Sigmoid colon (tissue), 7 donors: ENCODE measurements at regions of chrX and their contacts with region 1.

Region 1: DNA sequence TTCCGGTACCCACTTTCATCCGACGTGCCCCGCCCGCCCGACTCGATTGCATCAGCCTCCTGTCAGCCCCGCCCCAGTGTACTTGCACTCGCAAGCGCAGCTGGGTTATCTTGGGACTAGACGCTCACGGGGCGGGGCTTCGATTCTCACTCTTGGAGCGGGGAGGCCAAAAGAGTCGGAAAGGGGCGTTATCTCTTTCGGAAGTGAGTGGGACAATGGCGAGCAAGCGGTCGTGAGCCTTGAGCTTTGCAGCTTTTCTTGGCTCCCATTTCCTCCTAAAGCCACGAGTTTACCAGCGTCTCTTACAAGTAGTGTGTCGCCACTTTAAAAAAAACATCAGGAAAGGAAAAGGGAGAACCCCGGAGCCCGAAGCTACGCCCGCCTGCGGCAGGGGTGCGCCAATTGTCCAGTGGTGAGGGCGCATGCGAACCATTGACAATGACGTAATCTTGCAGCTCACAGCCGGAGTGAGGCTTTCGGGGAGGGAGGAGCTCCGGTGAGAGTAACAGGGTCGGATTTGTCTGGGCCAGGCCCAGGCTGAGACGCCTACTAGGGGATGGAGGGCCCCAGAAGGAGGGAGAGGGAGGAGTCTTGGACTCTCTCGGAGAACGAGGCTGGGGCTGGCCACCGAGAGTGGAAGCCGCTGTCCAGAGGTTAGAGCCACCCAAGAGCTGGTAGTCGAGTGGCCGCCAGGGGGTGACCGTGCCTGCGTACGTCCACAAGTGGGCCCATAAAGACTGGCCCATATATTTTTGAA is 109.5 kb downstream of the GNL3L start:
- DNase-seq: peak; percentile 98
- H3K4me3 ChIP-seq: peak overlapping the region; percentile 34 to 48 (median 47)
- H3K27ac ChIP-seq: peak overlapping the region; percentile 82 to 88 (median 86)
- H3K4me1 ChIP-seq: peaks cover 0 to 6% (median 0%) of the 10 kb centered on the region in 4 donors
- H3K27me3 ChIP-seq: no peaks in the 10 kb centered on the region
- CTCF ChIP-seq: peak; percentile 20 to 55 (median 43)
- EP300 ChIP-seq: peak in 1 of 4 donors; percentile 24
- POLR2A ChIP-seq: peak in 1 of 2 donors; percentile 29

Region 2: DNA sequence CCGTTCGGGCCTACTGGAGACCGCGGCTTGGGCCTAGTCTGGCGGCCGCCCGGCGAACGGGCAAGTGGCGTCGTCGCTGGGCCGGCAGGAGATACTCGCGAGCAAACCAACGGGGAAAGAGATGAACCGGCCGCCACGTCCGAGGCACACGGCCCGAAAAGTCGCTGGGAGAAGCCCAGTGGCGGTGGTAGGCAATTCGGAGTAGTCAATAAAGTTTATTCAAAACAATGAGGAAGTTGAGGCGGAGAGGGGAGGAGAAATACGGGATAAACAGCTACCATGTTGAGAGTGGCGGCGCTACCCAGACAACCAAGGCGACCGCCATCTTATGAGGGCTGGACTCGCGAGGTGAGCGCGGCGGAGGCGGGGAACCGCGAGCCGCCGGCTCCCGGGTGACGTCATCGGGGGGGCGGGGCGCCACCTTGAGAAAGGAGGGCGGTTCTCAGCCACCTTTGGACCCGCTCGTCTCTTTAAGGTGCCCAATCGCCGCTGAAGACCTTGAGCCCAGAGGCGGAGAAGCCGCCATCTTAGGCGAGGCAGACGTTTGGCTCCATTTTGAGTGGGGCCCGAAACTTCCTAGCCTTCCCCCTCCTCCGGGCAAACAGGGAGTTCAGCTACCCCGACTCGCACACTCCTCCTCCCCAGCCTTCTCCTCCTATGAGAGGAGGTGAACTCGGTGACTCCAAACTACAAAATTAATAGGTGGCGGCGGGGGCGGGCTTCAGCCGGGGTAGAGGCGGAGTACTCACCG is 595.2 kb before region 1 on chrX and contains the start of gene PHF8:
- intact Hi-C with region 1: loop called (anchors 10 kb)
- DNase-seq: peak; percentile 97
- H3K4me3 ChIP-seq: peak within 1 kb of the TSS; percentile 62 to 76 (median 68)
- H3K27ac ChIP-seq: peak within 1 kb of the TSS; percentile 91 to 95 (median 93)
- H3K4me1 ChIP-seq: no peaks in the 10 kb centered on the region
- H3K27me3 ChIP-seq: no peaks in the 10 kb centered on the region
- CTCF ChIP-seq: no peak
- EP300 ChIP-seq: no peak
- POLR2A ChIP-seq: peak; percentile 16 to 31
- total RNA-seq, gene PHF8: 15.3 to 44.9 (median 22.1) TPM

Region 3: DNA sequence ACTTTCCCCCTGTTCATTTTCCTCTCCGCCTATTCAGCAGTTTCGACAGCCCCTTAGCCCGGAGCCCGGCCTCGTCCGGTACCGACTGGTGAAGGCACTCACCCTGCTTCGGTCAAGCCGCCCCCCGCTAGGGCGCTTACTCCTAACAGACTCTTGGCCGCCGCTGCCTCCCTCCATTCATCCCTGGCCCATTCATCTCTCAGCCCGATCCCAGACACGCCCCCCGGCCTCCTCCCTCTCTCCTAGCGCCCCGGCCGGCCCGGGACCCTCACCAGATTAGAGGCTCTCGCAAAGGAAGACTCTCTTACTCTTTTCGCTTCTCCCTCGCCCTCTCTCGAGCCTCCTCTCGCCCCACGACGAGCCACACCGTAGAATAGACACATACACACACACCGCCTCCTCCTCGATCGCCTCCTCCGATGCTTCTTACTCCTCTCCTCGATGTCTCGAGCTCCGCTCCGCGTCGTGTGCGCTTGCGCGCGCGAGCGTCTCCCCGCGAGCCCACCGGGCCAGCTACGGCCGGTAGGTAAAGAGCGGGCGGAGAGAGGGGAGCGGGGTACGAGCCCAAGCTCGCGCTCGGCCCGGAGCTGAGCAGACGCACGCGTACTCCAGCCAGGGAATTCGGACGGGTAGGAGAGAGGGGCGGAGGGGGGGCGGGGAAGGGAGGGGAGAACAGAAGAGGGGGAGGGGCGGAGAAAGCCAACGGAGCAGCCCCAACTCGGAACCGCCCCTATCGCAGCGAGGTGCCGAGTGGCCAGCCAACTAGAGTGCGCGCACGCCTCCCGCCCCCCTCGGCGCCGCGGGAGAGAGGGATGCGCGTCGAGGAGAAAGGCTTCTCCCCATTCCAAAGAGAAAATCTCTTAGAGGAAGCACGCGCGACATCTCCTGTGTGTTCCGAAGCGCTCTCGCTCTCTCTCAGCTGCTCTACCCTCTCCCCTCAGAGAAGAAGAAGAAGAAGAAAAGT is 281.8 kb before region 1 on chrX and contains the start of gene WNK3:
- intact Hi-C with region 1: loop called (anchors 5 kb)
- DNase-seq: peak; percentile 92
- H3K4me3 ChIP-seq: peak within 1 kb of the TSS; percentile 34 to 55 (median 52)
- H3K27ac ChIP-seq: peak within 1 kb of the TSS; percentile 68 to 78 (median 70)
- H3K4me1 ChIP-seq: peaks cover 0 to 4% (median 0%) of the 10 kb centered on the region in 4 donors
- H3K27me3 ChIP-seq: no peaks in the 10 kb centered on the region
- CTCF ChIP-seq: no peak
- EP300 ChIP-seq: no peak
- POLR2A ChIP-seq: no peak
- total RNA-seq, gene WNK3: 1.6 to 1.9 (median 1.7) TPM

Region 4: DNA sequence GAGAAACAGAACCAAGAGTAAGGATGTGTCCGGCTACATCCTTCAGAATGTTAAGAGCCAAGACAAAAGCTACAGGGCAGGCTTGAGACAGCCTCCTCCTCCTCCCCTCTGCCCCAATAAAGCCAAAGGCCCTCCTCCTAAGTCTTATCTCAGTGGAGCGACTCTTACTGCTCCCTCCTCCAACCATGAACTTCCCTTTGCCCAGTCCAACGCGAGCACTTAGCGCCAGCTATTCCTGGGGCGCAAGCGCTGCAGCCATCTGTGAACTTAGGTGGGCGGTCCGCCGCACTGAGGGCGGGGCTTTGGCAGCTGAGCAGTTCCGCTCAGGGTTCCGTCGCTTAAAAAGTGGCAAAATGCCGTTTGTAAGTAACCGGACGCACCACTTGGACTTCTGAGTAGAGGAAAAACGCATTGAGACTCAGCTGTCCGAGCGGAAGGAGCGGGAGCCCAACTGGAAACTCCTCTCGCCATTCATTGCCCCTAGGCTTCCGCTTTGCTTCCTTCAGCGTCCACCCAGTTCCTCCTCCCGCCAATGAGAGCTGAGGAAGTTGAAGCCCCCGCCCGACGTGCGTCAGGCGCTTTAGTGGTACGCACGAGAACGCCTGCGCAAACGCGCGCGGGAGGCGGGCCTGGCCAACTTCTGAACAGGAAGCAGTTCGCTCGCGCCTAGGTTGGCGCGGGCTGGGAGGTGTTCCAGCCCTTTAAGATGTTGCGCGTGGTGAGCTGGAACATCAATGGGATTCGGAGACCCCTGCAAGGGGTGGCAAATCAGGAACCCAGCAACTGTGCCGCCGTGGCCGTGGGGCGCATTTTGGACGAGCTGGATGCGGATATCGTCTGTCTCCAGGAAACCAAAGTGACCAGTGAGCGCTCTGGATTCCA is 360.4 kb after region 1 on chrX and contains the start of gene APEX2:
- intact Hi-C with region 1: loop called (anchors 5 kb)
- DNase-seq: peak; percentile 96
- H3K4me3 ChIP-seq: peak within 1 kb of the TSS; percentile 34 to 58 (median 55)
- H3K27ac ChIP-seq: peak within 1 kb of the TSS; percentile 83 to 87 (median 84)
- H3K4me1 ChIP-seq: peaks cover 0 to 15% (median 6%) of the 10 kb centered on the region in 4 donors
- H3K27me3 ChIP-seq: no peaks in the 10 kb centered on the region
- CTCF ChIP-seq: no peak
- EP300 ChIP-seq: no peak
- POLR2A ChIP-seq: peak; percentile 66 to 77
- total RNA-seq, gene APEX2: 3.9 to 5.7 (median 4.6) TPM

Region 5: DNA sequence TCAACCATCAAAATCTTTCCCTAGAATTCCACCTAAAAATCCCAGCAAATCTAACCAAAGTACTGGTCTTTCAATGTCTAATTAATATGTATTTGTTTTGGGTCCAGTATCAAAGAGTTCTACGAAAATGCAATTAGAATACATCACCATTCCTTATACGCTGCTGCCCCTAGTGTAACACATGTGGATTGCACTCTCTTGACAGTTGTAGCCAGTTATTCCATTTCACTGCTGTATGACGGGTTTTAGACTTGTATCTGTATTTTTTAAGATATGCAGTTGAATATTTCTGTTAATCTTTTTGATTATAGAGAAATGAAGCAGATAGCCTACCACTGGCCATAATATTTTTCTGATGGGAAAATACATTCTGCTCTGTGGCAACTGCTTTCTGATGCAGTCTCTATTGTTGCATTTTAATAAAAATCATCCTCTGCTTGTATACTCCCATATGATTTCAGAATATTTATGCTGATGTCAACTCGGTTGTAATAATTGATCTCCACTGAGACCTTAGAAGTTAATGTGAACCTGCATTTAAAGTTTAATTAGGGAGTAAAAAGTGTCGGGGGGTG is 418.2 kb after region 1 on chrX:
- intact Hi-C with region 1: loop called (anchors 2 kb)
- DNase-seq: no peak
- H3K4me3 ChIP-seq: peak overlapping the region in 2 of 4 donors; percentile 1 to 15
- H3K27ac ChIP-seq: no peak overlapping the region
- H3K4me1 ChIP-seq: no peaks in the 10 kb centered on the region
- H3K27me3 ChIP-seq: no peaks in the 10 kb centered on the region
- CTCF ChIP-seq: peak; percentile 51 to 65 (median 56)
- EP300 ChIP-seq: no peak
- POLR2A ChIP-seq: no peak

Region 6: GRCh38 chrX:55160685-55161552 is 521.4 kb after region 1 on chrX:
- intact Hi-C with region 1: loop called (anchors 5 kb)
- DNase-seq: peak; percentile 95
- H3K4me3 ChIP-seq: peak overlapping the region; percentile 37 to 58 (median 54)
- H3K27ac ChIP-seq: peak overlapping the region; percentile 86 to 93 (median 88)
- H3K4me1 ChIP-seq: peaks cover 0 to 3% (median 0%) of the 10 kb centered on the region in 4 donors
- H3K27me3 ChIP-seq: no peaks in the 10 kb centered on the region
- CTCF ChIP-seq: no peak
- EP300 ChIP-seq: peak in 1 of 4 donors; percentile 37
- POLR2A ChIP-seq: peak; percentile 72 to 74

Region 7: DNA sequence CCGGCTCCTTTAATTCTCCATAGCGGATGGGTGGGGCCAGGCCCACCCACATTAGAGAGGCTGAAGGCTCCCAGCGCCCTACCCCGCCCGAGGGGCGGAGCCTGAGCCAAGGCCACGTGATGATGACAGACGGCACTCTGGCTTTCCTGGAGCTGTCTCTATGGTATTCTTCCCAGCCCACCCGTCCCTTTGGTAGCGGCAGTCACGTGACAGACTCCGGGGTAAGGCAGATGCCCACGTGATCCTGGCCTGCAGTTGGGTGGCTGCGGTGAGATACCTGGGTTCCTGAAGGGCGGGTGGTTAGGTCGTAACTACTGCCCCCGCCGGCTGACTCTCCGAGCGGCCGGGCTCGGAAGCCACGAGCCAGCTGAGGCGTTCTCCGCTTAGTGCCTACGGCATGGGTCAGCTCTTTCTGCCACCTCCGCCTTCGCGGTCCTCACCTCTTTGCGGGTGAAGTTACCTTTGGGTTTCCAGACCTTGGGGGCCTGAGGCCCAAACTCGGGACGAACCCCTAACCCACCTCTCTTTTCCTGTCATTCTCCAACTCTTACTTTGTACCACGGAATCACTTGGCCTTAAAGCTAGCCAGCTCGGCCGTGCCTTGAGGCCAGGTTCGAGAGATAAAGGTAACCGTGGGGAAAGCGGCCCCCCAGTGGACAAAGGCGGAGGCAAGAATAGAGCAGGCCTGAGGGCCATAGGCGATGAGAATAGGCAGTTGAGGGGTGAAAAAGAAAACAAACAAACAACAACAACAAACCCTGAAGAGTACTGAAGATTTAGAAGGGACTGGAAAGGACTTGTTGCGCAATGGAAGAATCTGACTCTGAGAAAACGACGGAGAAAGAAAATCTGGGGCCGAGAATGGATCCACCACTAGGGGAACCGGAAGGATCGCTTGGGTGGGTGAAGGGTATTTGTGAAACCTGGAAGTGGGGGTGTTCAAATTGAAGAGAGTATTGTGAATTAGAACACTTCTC is 1078.3 kb after region 1 on chrX and contains the start of gene RRAGB:
- intact Hi-C with region 1: loop called (anchors 10 kb)
- DNase-seq: peak; percentile 97
- H3K4me3 ChIP-seq: peak within 1 kb of the TSS; percentile 49 to 67 (median 62)
- H3K27ac ChIP-seq: peak within 1 kb of the TSS; percentile 81 to 87 (median 84)
- H3K4me1 ChIP-seq: peaks cover 0 to 12% (median 0%) of the 10 kb centered on the region in 4 donors
- H3K27me3 ChIP-seq: no peaks in the 10 kb centered on the region
- CTCF ChIP-seq: peak in 3 of 4 experiments; percentile 45 to 57 (median 47)
- EP300 ChIP-seq: peak in 1 of 4 donors; percentile 26
- POLR2A ChIP-seq: no peak
- total RNA-seq, gene RRAGB: 10.0 to 41.4 (median 24.4) TPM